ENCODE measurements at regions of chrX and their contacts with region 1.

Region 1: DNA sequence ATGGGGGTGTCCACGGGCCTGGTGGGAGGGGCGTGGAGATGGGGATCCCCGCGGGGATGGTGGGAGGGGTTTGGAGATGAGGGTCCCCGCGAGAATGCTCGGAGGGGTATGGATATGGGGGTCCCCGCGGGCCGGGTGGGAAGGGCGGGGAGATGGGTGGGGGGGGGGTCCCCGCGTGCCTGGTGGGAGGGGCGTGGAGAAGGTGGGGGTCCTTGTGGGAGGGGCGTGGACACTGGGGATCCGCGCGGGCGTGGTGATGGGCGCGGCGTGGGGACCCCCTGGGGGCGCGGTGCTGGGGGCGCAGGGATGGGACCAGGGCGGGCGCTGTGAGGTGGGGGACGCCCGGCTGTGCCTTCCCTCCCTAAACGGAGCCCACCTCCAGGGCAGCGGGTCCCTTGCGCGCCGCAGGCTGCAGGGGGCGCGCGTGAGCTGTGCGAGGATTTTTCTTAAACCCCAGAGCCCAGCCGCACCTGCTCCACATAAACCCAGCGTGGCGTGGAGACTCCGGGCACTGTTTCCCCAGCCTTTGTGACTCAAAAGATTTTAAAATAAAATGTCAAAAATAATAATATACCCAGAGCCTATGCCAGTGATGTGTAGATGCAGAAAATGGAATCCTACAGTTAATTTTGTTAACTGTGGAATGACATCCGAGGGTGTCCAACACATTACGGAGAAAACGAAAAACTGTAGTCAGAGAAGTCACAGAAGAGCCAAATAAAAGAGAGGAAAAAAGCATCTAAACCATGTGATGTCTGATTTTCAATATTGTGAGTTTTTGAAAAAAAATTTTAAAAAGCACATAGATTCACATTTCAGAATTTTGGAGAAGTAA is 1.5 kb upstream of the ASMTL start:
- DNase-seq: peak; percentile 92
- ATAC-seq: peak; percentile 29
- H3K4me3 Mint-ChIP-seq: peak overlapping the region; percentile 63
- H3K27ac Mint-ChIP-seq: peak overlapping the region; percentile 50
- H3K4me1 Mint-ChIP-seq: peaks cover 32% of the 10 kb centered on the region
- H3K27me3 Mint-ChIP-seq: no peaks in the 10 kb centered on the region
- CTCF ChIP-seq: peak; percentile 37

Region 2: DNA sequence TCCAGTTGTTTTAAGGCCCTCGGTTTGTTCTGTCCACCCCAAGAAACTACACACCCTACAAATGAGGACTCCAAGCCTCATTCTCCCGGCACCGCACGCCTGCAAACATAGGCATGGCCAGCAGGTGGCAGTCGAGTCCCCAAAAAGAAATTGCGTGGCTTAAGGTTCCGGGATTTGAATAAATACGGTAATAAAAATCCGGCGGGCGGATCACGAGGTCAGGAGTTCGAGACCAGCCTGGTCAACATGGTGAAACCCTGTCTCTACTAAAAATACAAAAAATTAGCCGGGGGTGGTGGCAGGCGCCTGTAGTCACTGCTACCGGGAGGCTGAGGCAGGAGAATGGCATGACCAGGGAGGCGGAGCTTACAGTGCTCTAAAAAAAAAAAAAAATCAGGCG is 207.4 kb before region 1 on chrX:
- CTCF ChIA-PET with region 1: no interaction called
- POLR2A ChIA-PET with region 1: no interaction called
- intact Hi-C with region 1: loop called (anchors 2 kb)
- DNase-seq: peak; percentile 71
- ATAC-seq: peak; percentile 65
- H3K4me3 Mint-ChIP-seq: no peak overlapping the region
- H3K27ac Mint-ChIP-seq: no peak overlapping the region
- H3K4me1 Mint-ChIP-seq: peaks cover 22% of the 10 kb centered on the region
- H3K27me3 Mint-ChIP-seq: peaks cover 5% of the 10 kb centered on the region
- CTCF ChIP-seq: no peak

Region 3: DNA sequence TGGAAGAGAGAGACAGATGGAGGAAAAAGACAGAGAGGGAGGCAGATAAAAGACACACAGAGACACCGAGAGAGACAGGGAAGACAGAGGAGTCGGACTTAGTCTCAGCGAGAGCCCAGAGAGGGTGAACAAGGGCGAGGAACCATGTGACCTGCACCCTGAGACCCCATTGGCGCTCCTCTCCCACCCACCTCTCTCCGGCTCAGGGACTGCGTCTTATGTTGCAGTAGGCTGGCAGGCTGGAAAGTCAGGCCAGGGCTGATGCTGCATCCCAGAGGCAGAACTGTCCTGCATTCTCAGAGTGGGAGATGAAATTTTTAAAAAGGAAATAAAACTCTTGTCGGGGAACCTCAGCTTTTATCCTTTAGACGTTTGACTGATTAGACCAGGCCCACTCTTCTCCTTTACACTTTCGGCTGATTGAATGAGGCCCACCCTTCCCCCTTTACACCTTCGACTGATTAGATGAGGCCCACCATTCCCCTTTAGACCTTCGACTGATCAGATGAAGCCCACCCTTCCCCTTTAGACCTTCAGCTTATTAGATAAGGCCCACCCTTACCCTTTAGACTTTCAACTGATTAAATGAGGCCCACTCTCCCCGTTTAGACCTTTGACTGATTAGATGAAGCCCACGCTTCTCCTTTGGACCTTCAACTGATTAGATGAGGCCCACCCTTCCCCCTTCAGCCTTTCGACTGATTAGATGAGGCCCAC is 147.1 kb before region 1 on chrX:
- CTCF ChIA-PET with region 1: no interaction called
- POLR2A ChIA-PET with region 1: no interaction called
- intact Hi-C with region 1: no loop called
- DNase-seq: no peak
- ATAC-seq: no peak
- H3K4me3 Mint-ChIP-seq: no peak overlapping the region
- H3K27ac Mint-ChIP-seq: no peak overlapping the region
- H3K4me1 Mint-ChIP-seq: no peaks in the 10 kb centered on the region
- H3K27me3 Mint-ChIP-seq: no peaks in the 10 kb centered on the region
- CTCF ChIP-seq: no peak

Region 4: GRCh38 chrX:1481636-1482529 is 27.7 kb after region 1 on chrX:
- CTCF ChIA-PET with region 1: no interaction called
- POLR2A ChIA-PET with region 1: no interaction called
- intact Hi-C with region 1: loop called (anchors 1 kb)
- DNase-seq: peak; percentile 63
- ATAC-seq: peak; percentile 53
- H3K4me3 Mint-ChIP-seq: peak overlapping the region; percentile 81
- H3K27ac Mint-ChIP-seq: peak overlapping the region; percentile 97
- H3K4me1 Mint-ChIP-seq: peaks cover 90% of the 10 kb centered on the region
- H3K27me3 Mint-ChIP-seq: no peaks in the 10 kb centered on the region
- CTCF ChIP-seq: no peak

Region 5: DNA sequence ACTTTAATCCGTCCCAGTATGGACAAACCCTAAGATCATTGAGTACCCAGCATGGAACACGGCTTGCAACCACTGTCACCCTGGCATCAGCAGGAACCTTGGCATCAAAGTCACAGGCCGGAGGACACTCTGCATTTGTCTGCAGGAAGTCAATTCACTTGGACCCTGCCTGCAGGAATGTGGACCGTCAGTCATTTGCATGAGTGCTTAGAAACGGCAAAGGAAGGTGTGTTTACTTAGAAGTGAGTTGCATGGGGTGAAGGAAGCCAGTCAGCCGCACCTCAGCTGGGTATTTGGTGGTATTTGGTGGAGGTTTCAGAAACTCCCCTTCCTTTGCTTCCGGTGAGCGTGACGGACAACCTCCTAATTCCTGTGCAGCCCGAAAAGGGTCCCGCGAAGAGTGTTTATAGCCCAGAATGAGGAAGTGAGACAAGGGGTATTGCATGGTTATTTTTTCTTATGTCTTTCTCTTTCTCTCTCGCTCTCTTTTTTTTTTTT is 67.3 kb after region 1 on chrX:
- CTCF ChIA-PET with region 1: no interaction called
- POLR2A ChIA-PET with region 1: no interaction called
- intact Hi-C with region 1: loop called (anchors 1 kb)
- DNase-seq: peak; percentile 66
- ATAC-seq: peak; percentile 85
- H3K4me3 Mint-ChIP-seq: peak overlapping the region; percentile 83
- H3K27ac Mint-ChIP-seq: peak overlapping the region; percentile 97
- H3K4me1 Mint-ChIP-seq: peaks cover 64% of the 10 kb centered on the region
- H3K27me3 Mint-ChIP-seq: no peaks in the 10 kb centered on the region
- CTCF ChIP-seq: no peak

Region 6: GRCh38 chrX:1657367-1658070 is 203.4 kb after region 1 on chrX:
- CTCF ChIA-PET with region 1: no interaction called
- POLR2A ChIA-PET with region 1: no interaction called
- intact Hi-C with region 1: loop called (anchors 1 kb)
- DNase-seq: peak; percentile 18
- ATAC-seq: no peak
- H3K4me3 Mint-ChIP-seq: peak overlapping the region; percentile 80
- H3K27ac Mint-ChIP-seq: peak overlapping the region; percentile 81
- H3K4me1 Mint-ChIP-seq: peaks cover 27% of the 10 kb centered on the region
- H3K27me3 Mint-ChIP-seq: no peaks in the 10 kb centered on the region
- CTCF ChIP-seq: no peak

Region 7: GRCh38 chrX:2521092-2521926 is 1067.1 kb after region 1 on chrX:
- CTCF ChIA-PET with region 1: no interaction called
- POLR2A ChIA-PET with region 1: no interaction called
- intact Hi-C with region 1: loop called (anchors 5 kb)
- DNase-seq: peak; percentile 34
- ATAC-seq: peak; percentile 88
- H3K4me3 Mint-ChIP-seq: peak overlapping the region; percentile 71
- H3K27ac Mint-ChIP-seq: no peak overlapping the region
- H3K4me1 Mint-ChIP-seq: peaks cover 28% of the 10 kb centered on the region
- H3K27me3 Mint-ChIP-seq: no peaks in the 10 kb centered on the region
- CTCF ChIP-seq: no peak

Region 8: GRCh38 chrX:2690856-2691542 is 1236.8 kb after region 1 on chrX and contains the start of gene CD99:
- CTCF ChIA-PET with region 1: no interaction called
- POLR2A ChIA-PET with region 1: no interaction called
- intact Hi-C with region 1: loop called (anchors 1 kb)
- DNase-seq: peak; percentile 92
- ATAC-seq: peak; percentile 92
- H3K4me3 Mint-ChIP-seq: peak within 1 kb of the TSS; percentile 89
- H3K27ac Mint-ChIP-seq: peak within 1 kb of the TSS; percentile 82
- H3K4me1 Mint-ChIP-seq: peaks cover 43% of the 10 kb centered on the region
- H3K27me3 Mint-ChIP-seq: no peaks in the 10 kb centered on the region
- CTCF ChIP-seq: no peak
- total RNA-seq, gene CD99: 86.4 and 102 TPM in 2 replicates